ENCODE measurements at regions of chr22 and their contacts with region 1.

Region 1: DNA sequence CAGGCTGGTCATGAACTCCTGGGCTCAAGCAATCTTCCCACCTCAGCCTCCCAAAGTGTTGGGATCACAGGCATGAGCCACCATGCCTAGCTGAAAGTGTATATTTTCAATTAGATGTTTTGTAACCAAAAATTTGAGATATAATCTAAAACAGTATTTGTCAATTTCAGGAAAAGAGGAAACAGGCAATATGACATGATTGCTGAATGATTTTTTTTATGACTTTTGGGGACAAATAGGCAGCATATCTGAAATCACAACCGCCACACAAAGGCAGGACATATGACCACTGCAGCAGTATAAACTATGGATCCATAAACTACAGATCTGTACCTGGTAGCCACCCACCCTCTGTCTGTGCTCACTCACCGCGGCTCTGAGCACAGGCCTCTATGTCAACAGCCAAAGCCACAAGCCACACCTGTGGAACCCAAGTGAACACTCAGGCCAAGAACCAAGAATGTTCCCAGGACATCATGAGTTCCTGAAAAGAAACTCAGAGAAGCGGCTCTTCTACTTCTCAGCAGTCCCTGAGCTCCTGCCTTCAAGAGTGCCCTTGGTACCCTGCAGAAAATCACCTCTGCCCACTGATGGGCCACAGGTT is 22.5 kb downstream of the PISD start:
- DNase-seq: no peak
- ATAC-seq: no peak
- H3K4me3 ChIP-seq: no peak overlapping the region
- H3K27ac ChIP-seq: no peak overlapping the region
- H3K4me1 ChIP-seq: no peaks in the 10 kb centered on the region; the same call in 1 of the 2 replicates
- H3K27me3 ChIP-seq: no peaks in the 10 kb centered on the region
- CTCF ChIP-seq: no peak

Region 2: DNA sequence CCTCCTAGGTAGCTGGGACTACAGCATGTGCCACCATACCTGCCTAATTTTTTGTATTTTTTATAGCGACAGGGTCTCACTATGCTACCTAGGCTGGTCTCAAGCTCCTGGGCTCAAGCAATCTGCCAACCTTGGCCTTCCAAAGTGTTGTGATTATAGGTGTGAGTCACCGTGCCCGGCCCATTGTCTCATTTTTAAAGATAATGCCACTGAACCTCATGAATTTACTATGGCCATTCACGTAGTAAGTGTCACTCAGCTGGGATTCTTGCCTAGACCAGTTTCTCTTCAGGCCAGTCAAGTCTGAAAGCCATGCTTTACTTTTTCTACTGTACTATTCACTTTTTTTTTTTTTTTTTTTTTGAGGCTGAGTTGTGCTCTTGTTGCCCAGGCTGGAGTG is 136.7 kb after region 1 on chr22:
- CTCF ChIA-PET with region 1: no interaction called
- POLR2A ChIA-PET with region 1: interaction called, 10 read pairs
- in situ Hi-C with region 1: no loop called
- intact Hi-C with region 1: no loop called
- DNase-seq: no peak
- ATAC-seq: no peak
- H3K4me3 ChIP-seq: no peak overlapping the region
- H3K27ac ChIP-seq: no peak overlapping the region
- H3K4me1 ChIP-seq: no peaks in the 10 kb centered on the region
- H3K27me3 ChIP-seq: no peaks in the 10 kb centered on the region
- CTCF ChIP-seq: no peak

Region 3: DNA sequence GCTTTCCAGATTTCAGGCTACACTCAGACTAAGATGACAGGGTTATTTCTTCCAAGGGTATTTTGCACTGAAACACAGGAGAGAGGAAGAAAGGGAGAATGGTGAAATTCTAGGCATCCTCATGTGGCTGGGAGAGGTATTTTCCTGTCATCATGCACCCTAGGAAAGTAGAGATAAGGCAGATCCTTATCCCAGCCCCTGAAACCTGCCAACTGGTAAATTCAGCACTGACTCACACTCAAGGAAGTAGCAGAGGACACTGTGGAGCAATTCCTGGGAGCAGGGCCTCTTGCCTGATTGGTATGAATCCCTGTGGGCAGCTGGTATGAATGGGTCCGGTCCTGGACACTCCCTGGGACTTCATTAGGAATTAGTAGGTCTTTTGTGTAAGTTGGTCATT is 365.9 kb after region 1 on chr22:
- CTCF ChIA-PET with region 1: no interaction called
- POLR2A ChIA-PET with region 1: interaction called, 18 read pairs
- in situ Hi-C with region 1: no loop called
- intact Hi-C with region 1: no loop called
- DNase-seq: no peak
- ATAC-seq: no peak
- H3K4me3 ChIP-seq: no peak overlapping the region
- H3K27ac ChIP-seq: no peak overlapping the region
- H3K4me1 ChIP-seq: no peaks in the 10 kb centered on the region
- H3K27me3 ChIP-seq: no peaks in the 10 kb centered on the region
- CTCF ChIP-seq: no peak